ENCODE measurements at regions of chr7 and their contacts with region 1.

Region 1: GRCh38 chr7:101299511-101300464 is 21.8 kb downstream of the IFT22 start:
- DNase-seq: peak in 1 of 4 experiments; percentile 4
- ATAC-seq: peak; percentile 42; the same call in 1 of the 3 replicates
- H3K4me3 ChIP-seq: no peak overlapping the region
- H3K27ac ChIP-seq: no peak overlapping the region
- H3K4me1 ChIP-seq: peaks cover 0 to 18% of the 10 kb centered on the region in 2 experiments; a peak in 2 of 5 replicates
- H3K27me3 ChIP-seq: peaks cover 23 to 60% of the 10 kb centered on the region in 2 experiments; a peak in 4 of 5 replicates
- CTCF ChIP-seq: no peak
- EP300 ChIP-seq: no peak
- POLR2A ChIP-seq: no peak
- RAD21 ChIP-seq: no peak

Region 2: GRCh38 chr7:100914879-100915447 is 384.8 kb before region 1 on chr7:
- CTCF ChIA-PET with region 1: no interaction called
- POLR2A ChIA-PET with region 1: no interaction called
- in situ Hi-C with region 1: loop called (anchors 25 kb)
- intact Hi-C with region 1: no loop called
- DNase-seq: no peak
- ATAC-seq: no peak
- H3K4me3 ChIP-seq: no peak overlapping the region
- H3K27ac ChIP-seq: no peak overlapping the region
- H3K4me1 ChIP-seq: peaks cover 4% of the 10 kb centered on the region in 2 experiments; a peak in 1 of 5 replicates
- H3K27me3 ChIP-seq: no peaks in the 10 kb centered on the region
- CTCF ChIP-seq: no peak
- EP300 ChIP-seq: no peak
- POLR2A ChIP-seq: no peak
- RAD21 ChIP-seq: no peak

Region 3: DNA sequence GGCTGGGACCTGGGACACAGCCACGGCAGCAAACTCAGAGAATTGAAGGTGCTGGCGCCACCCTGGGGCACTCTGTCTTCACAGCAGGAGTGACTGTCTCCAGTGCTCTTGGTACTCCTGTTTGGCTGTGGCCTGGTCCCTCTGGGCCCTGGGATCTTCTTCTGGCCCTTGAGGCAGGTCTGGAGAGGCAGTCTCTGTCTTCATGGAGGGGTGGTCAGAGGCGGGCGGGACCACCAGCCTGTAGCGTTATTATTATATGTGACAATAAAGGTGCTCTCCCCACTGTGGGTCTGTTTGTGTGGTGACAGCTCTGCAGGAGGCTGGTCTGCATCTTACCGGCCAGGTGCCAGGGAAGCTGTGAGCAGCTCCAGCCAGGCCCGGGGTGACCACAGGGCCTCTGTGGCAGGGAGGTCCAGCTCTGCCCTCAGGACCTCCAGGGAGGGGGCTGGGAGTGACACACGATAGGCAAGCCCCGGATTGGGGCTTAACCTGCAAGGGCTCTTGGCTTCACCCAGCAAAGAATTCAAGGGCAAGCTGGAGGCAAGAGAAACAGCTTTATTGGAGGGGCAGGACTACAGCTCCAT is 259.0 kb after region 1 on chr7:
- CTCF ChIA-PET with region 1: no interaction called
- POLR2A ChIA-PET with region 1: no interaction called
- in situ Hi-C with region 1: no loop called
- intact Hi-C with region 1: no loop called
- DNase-seq: peak in 3 of 4 experiments; percentile 11 to 30 (median 29)
- ATAC-seq: peak; percentile 78
- H3K4me3 ChIP-seq: no peak overlapping the region
- H3K27ac ChIP-seq: no peak overlapping the region
- H3K4me1 ChIP-seq: peaks cover 0 to 10% of the 10 kb centered on the region in 2 experiments; a peak in 2 of 5 replicates
- H3K27me3 ChIP-seq: peaks cover 7 to 60% of the 10 kb centered on the region in 2 experiments; a peak in 3 of 5 replicates
- CTCF ChIP-seq: peak; percentile 31 to 49 (median 39); a peak in 5 of 6 replicates
- EP300 ChIP-seq: no peak
- POLR2A ChIP-seq: no peak
- RAD21 ChIP-seq: peak in 1 of 2 experiments; percentile 35; a peak in 2 of 4 replicates

Measured in K562 (cell line).